ENCODE measurements at regions of chr18 and their contacts with region 1.

Region 1: DNA sequence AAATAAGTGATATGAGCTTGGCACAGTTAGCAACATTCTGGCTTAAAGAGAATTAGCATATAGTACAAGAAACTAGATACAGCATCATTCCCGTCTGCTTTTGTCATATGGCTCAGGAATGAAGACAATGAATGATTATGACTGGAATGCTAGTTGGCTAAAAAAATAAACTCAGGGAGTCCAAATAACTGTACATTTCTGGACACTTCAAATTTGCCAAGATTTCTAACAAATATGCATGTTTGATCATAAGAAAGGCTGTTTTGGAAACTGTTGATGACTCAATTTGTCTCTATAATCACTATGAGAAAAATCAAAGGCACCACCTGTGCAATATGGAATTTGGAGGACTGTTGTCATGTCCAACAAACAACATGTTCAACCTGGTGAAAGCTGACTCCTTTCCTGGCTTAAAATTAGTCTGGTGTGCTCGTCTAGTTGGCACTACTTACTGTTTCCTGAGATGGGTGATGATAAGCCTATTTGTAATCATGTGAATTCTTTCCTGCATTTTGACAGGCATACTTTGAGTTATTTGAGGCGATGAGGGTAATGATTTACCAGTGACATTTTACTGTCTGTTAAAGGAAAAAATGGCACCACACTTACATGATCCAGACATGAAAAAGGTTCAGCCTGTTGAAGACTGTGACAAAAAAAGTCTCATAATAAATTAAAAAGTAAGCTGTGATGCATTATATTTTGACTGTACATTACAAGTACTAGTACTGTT is 133.9 kb upstream of the CDH20 start:
- DNase-seq: no peak
- ATAC-seq: no peak
- H3K4me3 ChIP-seq: no peak overlapping the region
- H3K27ac ChIP-seq: no peak overlapping the region
- H3K4me1 ChIP-seq: no peaks in the 10 kb centered on the region
- H3K27me3 ChIP-seq: no peaks in the 10 kb centered on the region
- CTCF ChIP-seq: no peak
- POLR2A ChIP-seq: no peak

Region 2: DNA sequence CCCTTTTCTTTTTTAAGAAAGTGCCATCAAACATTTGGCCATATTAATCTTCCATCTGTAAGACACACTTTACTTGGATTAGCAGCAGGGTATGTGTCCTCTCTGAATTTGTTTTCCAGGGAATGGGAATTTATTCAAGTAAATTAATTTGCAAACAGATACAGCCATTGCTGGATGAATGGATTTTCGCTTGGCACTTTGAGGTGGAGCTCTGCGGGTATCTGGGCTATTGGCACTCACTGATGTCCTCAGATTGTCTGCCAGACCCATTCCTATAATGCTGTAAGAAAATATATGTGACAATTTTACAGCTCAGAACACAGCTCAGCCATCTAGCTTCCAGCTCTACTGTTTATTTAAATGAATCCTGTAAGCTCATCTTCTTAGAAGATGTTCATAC is 67.3 kb before region 1 on chr18:
- intact Hi-C with region 1: loop called in 1 of 10 experiments (anchors 10 kb)
- DNase-seq: no peak
- ATAC-seq: no peak
- H3K4me3 ChIP-seq: no peak overlapping the region
- H3K27ac ChIP-seq: no peak overlapping the region
- H3K4me1 ChIP-seq: no peaks in the 10 kb centered on the region
- H3K27me3 ChIP-seq: no peaks in the 10 kb centered on the region
- CTCF ChIP-seq: no peak
- POLR2A ChIP-seq: no peak

Measured in heart left ventricle (tissue), 16 donors.